ENCODE measurements at regions of chr5 and their contacts with region 1.

Region 1: DNA sequence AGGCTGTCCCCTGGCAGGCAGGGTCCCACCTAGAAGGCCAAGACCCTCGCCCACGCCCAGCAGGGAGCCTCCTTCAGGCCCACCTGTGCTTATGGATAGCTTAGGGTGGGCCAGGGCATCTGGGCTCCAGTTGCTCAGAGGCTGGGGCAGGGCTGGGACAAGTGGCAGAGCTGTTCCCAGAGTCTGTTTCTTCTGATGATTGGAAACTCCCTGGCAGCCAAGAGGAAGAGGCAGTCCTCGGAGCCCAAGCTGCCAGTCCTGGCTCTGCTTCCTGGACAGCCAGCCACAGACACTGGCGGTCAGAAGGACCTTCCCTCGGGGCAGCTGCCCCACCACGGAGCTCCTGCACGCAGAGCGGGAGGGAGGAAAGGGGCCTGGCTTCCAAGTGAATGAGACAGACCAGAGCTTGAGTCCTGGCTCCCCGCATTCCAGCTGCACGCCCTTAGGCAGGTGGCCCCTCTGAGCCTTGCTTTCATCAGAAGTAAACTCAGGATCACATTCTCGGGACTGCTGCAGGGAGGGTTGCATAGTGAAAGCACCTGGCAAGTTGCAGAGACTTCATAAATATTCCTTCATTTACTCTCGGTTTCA is 37.9 kb upstream of the GABRP start:
- DNase-seq: no peak
- H3K4me3 Mint-ChIP-seq: no peak overlapping the region
- H3K27ac Mint-ChIP-seq: no peak overlapping the region
- H3K4me1 Mint-ChIP-seq: peaks cover 7% of the 10 kb centered on the region
- H3K27me3 Mint-ChIP-seq: peaks cover 33% of the 10 kb centered on the region

Region 2: GRCh38 chr5:170638454-170639220 is 106.9 kb before region 1 on chr5:
- CTCF ChIA-PET with region 1: interaction called, 3 read pairs
- intact Hi-C with region 1: loop called (anchors 5 kb)
- DNase-seq: peak; percentile 83
- H3K4me3 Mint-ChIP-seq: no peak overlapping the region
- H3K27ac Mint-ChIP-seq: no peak overlapping the region
- H3K4me1 Mint-ChIP-seq: peaks cover 9% of the 10 kb centered on the region
- H3K27me3 Mint-ChIP-seq: peaks cover 3% of the 10 kb centered on the region

Region 3: DNA sequence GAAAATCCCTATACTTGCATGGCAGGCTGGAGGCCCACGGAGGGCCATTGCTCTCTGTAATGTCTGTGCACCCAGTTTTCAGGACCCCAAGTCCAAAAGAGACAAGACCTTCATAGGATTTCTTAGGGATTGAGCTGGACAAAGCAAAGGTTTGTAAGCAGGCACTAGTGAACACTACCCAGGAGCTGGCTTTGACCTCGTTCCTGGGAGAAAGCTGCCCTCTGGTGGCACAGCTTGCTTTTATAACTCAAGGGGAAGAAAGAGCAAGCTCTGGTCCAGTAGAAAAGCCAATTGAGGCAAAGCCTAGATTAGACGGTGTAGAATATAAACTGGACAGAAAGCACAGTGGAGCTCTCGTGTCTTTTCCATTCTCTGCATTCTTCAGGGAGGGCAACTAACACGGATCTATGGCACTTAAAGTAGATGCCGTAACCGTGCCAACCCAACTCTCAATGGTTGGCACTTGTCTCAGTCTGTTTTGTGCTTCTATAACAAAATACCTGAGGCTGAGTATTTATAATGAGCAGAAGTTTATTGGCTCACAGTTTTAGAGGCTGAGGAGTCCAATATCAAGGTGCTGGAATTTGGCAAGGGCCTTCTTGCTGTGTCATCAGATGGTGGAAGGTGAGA is 45.9 kb after region 1 on chr5:
- CTCF ChIA-PET with region 1: interaction called, 15 read pairs
- intact Hi-C with region 1: loop called (anchors 1 kb)
- DNase-seq: peak; percentile 53
- H3K4me3 Mint-ChIP-seq: no peak overlapping the region
- H3K27ac Mint-ChIP-seq: no peak overlapping the region
- H3K4me1 Mint-ChIP-seq: no peaks in the 10 kb centered on the region
- H3K27me3 Mint-ChIP-seq: no peaks in the 10 kb centered on the region

Region 4: GRCh38 chr5:170913573-170913972 is 168.0 kb after region 1 on chr5:
- CTCF ChIA-PET with region 1: interaction called, 3 read pairs
- intact Hi-C with region 1: loop called (anchors 5 kb)
- DNase-seq: no peak
- H3K4me3 Mint-ChIP-seq: no peak overlapping the region
- H3K27ac Mint-ChIP-seq: no peak overlapping the region
- H3K4me1 Mint-ChIP-seq: no peaks in the 10 kb centered on the region
- H3K27me3 Mint-ChIP-seq: no peaks in the 10 kb centered on the region

Region 5: GRCh38 chr5:171122372-171122771 is 376.8 kb after region 1 on chr5:
- CTCF ChIA-PET with region 1: no interaction called
- intact Hi-C with region 1: no loop called
- DNase-seq: no peak
- H3K4me3 Mint-ChIP-seq: no peak overlapping the region
- H3K27ac Mint-ChIP-seq: no peak overlapping the region
- H3K4me1 Mint-ChIP-seq: no peaks in the 10 kb centered on the region
- H3K27me3 Mint-ChIP-seq: peaks cover 13% of the 10 kb centered on the region

Region 6: DNA sequence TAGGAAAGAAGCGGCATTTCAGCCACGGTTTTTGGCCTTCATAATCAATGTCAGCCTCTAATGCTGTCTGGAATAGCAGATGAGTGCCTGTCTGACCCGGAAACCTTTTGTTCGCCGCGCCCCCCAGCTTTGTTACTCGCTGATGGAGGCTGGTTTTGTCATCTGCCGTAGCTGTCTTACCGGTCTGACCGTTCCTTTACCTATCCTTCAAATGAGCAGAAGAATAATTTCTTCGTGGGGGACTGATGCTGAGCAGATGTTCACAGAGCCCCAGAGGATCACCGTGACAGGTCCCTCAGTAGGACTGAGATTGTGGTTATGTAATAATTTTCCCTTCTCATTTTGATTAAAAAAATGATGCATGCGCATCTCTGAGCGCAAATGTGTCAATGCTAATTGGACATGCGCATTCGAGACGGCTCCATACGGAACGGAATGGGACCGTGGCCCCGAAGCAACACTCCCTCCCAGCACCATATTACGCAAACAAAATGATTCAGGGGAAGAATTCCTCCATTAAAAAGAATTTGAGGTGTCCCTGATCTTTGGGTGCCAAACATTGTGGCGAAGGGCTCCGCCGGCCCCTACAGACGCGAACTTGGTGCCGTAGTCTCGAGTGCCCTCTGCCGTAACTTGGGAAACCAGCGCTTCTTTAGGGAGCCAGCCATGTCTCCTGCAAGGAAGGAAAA is 591.1 kb after region 1 on chr5:
- CTCF ChIA-PET with region 1: interaction called, 4 read pairs
- intact Hi-C with region 1: loop called (anchors 2 kb)
- DNase-seq: peak; percentile 49
- H3K4me3 Mint-ChIP-seq: peak overlapping the region; percentile 62
- H3K27ac Mint-ChIP-seq: no peak overlapping the region
- H3K4me1 Mint-ChIP-seq: peaks cover 5% of the 10 kb centered on the region
- H3K27me3 Mint-ChIP-seq: peaks cover 32% of the 10 kb centered on the region